Gastrocnemius medialis (tissue), 4 donors: ENCODE measurements at regions of chr16 and their contacts with region 1.

Region 1: GRCh38 chr16:66977341-66978113 is 10.9 kb upstream of the CES4A start:
- DNase-seq: peak; percentile 81 to 88
- ATAC-seq: peak; percentile 81 to 92
- H3K4me3 ChIP-seq: no peak overlapping the region
- H3K27ac ChIP-seq: peak overlapping the region in 3 of 4 donors; percentile 23 to 47 (median 36)
- H3K4me1 ChIP-seq: peaks cover 0 to 10% of the 10 kb centered on the region in 2 donors
- H3K27me3 ChIP-seq: no peaks in the 10 kb centered on the region
- CTCF ChIP-seq: peak; percentile 96 to 99 (median 98)
- POLR2A ChIP-seq: no peak

Region 2: DNA sequence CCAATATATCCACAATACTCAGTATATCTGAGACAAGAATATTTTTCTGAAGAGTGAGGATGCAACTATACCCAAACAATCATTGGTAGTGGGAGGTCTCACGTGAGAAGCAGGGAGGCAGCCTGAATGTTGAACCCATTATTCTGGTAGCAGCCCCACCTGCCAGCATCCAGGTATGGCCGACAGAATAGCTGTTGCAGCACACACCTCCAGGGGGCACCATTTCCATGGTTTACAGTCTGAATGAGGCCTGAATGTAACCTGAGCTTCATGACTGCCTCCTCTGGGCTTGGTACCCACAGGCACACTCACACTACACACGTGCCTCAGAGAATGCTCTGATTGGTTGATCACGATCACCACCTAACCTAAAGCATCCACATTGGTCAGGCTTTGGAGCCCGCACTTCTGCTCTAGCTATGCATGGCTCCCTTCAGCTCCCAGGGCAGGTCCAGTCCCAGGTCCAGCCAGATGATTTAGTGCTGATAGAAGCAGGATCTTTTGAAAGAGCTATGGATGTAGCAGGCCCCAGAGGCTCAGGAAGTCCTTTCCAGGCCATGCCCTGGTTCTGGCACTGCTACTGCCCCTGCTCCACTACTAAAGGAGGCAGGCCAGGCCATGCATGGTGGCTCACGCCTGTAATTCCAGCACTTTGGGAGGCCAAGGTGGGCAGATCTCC is 40.4 kb after region 1 on chr16:
- in situ Hi-C with region 1: no loop called
- intact Hi-C with region 1: loop called (anchors 2 kb)
- DNase-seq: peak; percentile 52 to 82
- ATAC-seq: peak; percentile 79 to 92
- H3K4me3 ChIP-seq: no peak overlapping the region
- H3K27ac ChIP-seq: no peak overlapping the region
- H3K4me1 ChIP-seq: peaks cover 5 to 7% of the 10 kb centered on the region in 2 donors
- H3K27me3 ChIP-seq: no peaks in the 10 kb centered on the region
- CTCF ChIP-seq: peak; percentile 64 to 85 (median 75)
- POLR2A ChIP-seq: no peak

Region 3: DNA sequence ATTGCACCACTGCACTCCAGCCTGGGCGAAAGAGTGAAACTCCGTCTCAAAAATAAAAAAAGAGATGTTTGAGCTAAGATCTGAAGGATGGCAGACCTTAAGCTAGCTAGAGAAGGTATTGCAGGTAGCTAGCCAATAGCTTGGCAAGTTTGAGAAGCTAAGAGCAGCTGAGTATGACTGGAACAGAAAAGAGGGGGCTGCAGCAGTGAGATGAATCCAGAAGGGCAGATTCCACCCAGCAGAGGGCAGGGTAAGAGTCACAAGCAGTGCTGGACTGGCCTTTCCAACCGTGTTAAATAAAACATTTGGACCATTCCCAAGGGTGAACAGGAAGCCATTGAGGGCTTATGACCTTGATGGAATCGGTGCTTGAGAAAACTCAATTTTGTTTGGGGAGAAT is 126.5 kb after region 1 on chr16:
- in situ Hi-C with region 1: no loop called
- intact Hi-C with region 1: loop called (anchors 2 kb)
- DNase-seq: no peak
- ATAC-seq: peak in 1 of 2 donors; percentile 38
- H3K4me3 ChIP-seq: no peak overlapping the region
- H3K27ac ChIP-seq: no peak overlapping the region
- H3K4me1 ChIP-seq: peaks cover 4 to 21% of the 10 kb centered on the region in 2 donors
- H3K27me3 ChIP-seq: no peaks in the 10 kb centered on the region
- CTCF ChIP-seq: peak in 4 of 5 experiments; percentile 5 to 42 (median 24)
- POLR2A ChIP-seq: no peak

Region 4: DNA sequence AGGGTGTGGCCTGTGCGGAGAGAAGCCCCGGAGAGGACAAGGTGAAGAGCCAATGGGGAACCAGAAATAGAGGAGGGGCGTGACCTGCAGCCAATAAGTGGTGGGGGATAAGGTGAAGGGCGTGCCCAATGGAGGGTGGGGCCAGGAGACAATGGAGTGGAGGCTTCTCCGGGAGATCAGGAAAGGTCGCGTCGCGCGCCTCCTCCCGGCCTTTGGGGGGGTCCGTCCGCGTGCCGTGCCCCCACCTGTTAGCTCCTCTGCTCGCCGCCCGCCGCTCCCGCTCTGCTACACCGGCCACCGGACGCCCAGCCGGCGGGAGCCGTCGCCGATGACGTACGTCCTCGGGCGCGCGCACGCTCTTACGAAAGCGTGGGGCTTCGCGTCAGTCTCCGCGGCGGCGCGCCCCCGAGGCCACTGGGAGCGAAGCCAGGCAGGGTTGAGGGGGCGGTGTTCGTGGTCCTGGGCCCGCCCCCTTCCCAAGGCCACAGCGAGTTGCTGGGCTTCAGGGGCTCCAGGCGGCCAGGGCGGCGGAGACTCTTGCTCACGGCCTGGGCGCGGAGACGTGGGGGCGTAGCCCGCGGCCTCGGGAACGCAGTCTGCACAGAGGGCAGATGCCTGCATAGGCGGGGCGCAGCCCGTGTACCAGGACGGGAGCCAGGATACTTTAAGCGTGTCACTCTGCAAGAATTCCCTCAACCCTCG is 206.3 kb after region 1 on chr16 and contains the start of gene MATCAP1:
- in situ Hi-C with region 1: no loop called
- intact Hi-C with region 1: loop called (anchors 1 kb)
- DNase-seq: peak; percentile 95 to 97
- ATAC-seq: peak; percentile 93 to 96
- H3K4me3 ChIP-seq: peak within 1 kb of the TSS; percentile 65 to 88 (median 70)
- H3K27ac ChIP-seq: peak within 1 kb of the TSS; percentile 85 to 97 (median 95)
- H3K4me1 ChIP-seq: peaks cover 16 to 31% of the 10 kb centered on the region in 2 donors
- H3K27me3 ChIP-seq: no peaks in the 10 kb centered on the region
- CTCF ChIP-seq: no peak
- POLR2A ChIP-seq: peak; percentile 61 to 63
- total RNA-seq, gene MATCAP1: 2.5 to 7.7 (median 4.5) TPM